Calu3 (cell line): ENCODE measurements at regions of chr7 and their contacts with region 1.

Region 1: DNA sequence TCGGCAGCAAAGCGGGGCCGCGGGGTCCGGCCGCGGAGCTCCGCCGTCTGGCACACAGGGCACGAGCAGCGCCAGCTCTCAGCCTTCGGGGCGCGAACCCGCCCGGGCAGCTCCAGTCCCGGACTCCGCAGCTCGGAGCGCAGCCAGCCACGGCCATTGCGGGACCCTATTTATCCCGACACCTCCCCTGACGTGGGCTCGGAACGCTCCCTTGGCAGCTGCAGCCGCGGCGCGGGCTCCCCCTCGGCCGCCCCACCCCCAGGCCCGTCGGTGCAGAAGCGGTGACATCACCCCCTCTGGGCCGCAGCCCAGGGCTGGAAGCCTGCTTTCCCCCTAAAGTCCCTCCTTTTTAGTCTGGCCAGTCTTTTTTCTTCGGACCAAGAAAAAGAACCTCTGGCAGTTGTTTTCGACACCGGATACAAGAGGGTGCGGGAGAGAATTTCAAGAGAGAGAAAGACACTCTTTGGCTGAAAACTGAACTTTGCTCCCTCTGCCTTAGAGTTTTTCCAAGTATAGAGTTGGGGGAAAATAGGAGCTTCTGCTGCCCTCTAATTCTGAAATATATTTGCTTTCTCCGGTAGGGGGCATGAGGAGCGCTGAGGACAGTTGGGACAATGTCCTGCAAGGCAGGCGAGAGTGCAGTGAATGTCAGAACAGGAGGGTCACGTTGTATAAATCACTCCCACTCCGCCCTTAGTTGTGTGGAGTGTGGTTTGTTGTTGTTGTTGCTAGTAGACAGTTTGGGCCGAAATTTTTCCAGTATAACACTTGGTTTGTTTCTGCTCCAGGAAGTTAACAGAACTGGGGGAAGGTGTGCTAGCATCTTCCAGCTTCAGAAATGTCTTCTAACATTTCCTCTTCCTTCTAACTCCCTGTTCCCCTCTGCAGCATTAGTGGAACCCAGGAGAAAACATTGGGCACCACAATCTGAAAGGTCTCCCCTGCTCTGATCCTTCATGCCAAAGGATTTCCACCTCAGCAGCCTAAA is at the start of gene SFRP4:
- DNase-seq: peak; percentile 78
- H3K4me3 Mint-ChIP-seq: peak within 1 kb of the TSS; percentile 78
- H3K27ac Mint-ChIP-seq: peak within 1 kb of the TSS; percentile 31
- H3K4me1 Mint-ChIP-seq: peaks cover 35% of the 10 kb centered on the region
- H3K27me3 Mint-ChIP-seq: peaks cover 29% of the 10 kb centered on the region
- CTCF ChIP-seq: peak; percentile 71
- total RNA-seq, gene SFRP4: not detected in 2 replicates

Region 2: GRCh38 chr7:37901236-37901827 is 15.6 kb before region 1 on chr7:
- CTCF ChIA-PET with region 1: interaction called, 21 read pairs
- intact Hi-C with region 1: no loop called
- DNase-seq: no peak
- H3K4me3 Mint-ChIP-seq: peak overlapping the region; percentile 31
- H3K27ac Mint-ChIP-seq: no peak overlapping the region
- H3K4me1 Mint-ChIP-seq: peaks cover 34% of the 10 kb centered on the region
- H3K27me3 Mint-ChIP-seq: no peaks in the 10 kb centered on the region
- CTCF ChIP-seq: peak; percentile 77

Region 3: GRCh38 chr7:37987732-37988131 is 70.8 kb after region 1 on chr7:
- CTCF ChIA-PET with region 1: interaction called, 3 read pairs
- intact Hi-C with region 1: loop called (anchors 5 kb)
- DNase-seq: peak; percentile 55
- H3K4me3 Mint-ChIP-seq: peak overlapping the region; percentile 2
- H3K27ac Mint-ChIP-seq: peak overlapping the region; percentile 9
- H3K4me1 Mint-ChIP-seq: peaks cover 51% of the 10 kb centered on the region
- H3K27me3 Mint-ChIP-seq: no peaks in the 10 kb centered on the region
- CTCF ChIP-seq: no peak

Region 4: DNA sequence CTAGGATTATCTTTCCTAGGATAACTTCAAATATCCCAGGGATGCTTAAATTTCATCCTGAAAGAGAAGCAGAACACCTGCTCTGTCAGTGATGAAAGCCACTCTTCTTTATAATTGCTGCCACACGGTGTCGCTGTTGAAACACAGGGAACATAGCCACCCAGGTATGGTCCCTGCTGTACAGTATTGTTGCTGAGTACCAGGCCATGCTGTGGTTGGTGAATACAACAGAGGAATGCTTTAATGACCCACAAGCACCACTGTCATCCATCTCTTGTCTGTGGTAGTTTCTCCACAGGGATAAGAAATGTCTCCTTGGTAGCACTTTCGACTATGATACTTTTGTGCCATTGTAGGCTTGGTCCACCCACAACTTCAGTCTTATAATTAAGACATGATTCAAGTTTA is 190.5 kb after region 1 on chr7:
- CTCF ChIA-PET with region 1: interaction called, 7 read pairs
- intact Hi-C with region 1: loop called (anchors 1 kb)
- DNase-seq: peak; percentile 86
- H3K4me3 Mint-ChIP-seq: no peak overlapping the region
- H3K27ac Mint-ChIP-seq: no peak overlapping the region
- H3K4me1 Mint-ChIP-seq: no peaks in the 10 kb centered on the region
- H3K27me3 Mint-ChIP-seq: no peaks in the 10 kb centered on the region
- CTCF ChIP-seq: peak; percentile 93

Region 5: DNA sequence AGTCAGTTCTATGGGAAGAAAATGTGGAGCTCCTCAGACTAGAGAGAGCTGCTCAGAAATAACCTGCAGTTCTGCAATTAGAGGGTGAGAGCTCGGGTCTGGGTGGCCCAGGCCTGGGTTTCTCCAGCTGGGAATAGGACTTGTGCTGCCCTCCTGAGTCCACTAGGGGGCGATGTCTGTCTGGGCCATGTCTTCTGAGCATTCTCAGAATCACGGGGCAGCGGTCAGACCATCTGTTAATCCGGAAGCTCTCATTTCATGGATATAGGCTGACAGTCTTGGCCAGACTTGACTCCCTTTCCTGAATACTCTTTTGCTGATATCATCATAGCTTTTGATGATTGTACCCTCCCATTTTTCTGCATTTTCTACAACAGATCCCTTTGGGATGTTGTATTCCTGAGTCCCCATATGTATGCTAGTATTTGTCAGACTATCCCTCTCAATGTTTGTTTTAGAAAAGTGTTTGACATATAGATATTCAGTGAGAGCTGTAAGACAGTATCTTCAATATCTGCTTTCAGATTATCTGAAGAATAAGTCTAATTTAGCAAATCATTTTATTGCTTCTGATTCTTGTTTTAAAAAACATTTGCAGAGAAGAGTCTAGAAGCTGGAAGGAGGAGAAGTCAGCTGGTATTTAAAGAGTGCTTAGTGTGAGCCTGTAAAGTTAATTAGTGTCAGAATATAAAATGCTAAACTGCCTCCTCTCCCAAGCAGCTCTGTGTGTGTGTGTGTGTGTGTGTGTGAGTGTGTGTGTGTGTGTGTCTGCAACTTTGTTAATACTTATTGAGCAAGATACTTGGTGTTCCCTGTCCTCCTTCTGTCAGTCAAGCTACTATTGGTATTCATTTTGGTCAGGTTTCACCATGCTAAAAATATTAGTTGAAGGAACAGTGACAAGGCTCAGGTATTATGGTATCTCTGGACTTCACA is 299.0 kb after region 1 on chr7:
- CTCF ChIA-PET with region 1: interaction called, 15 read pairs
- intact Hi-C with region 1: loop called (anchors 5 kb)
- DNase-seq: peak; percentile 74
- H3K4me3 Mint-ChIP-seq: no peak overlapping the region
- H3K27ac Mint-ChIP-seq: peak overlapping the region; percentile 37
- H3K4me1 Mint-ChIP-seq: peaks cover 17% of the 10 kb centered on the region
- H3K27me3 Mint-ChIP-seq: no peaks in the 10 kb centered on the region
- CTCF ChIP-seq: peak; percentile 93